AG04450 (cell line): ENCODE measurements at regions of chr7 and their contacts with region 1.

Region 1: DNA sequence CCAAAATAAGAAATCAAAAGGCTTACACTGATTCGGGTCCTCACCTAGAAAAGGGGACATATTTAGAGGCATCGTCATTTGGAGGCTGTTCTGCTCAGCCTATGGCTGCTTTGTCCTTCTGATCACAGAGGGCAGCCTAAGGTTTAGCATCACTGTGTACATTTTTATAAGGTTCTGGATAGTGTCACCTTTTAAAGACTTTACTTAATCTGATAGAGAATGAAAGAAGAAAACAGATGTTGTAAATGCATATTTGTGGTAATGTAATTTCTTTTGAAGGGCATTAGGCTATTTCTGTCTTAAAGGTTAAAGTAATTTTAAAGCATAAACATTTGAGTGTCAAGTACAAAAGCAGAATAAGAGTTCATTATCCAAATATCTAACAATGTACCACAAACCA is 445.3 kb upstream of the LRRN3 start:
- DNase-seq: no peak
- H3K4me3 ChIP-seq: no peak overlapping the region
- H3K27ac ChIP-seq: no peak overlapping the region
- H3K27me3 ChIP-seq: no peaks in the 10 kb centered on the region
- CTCF ChIP-seq: no peak

Region 2: DNA sequence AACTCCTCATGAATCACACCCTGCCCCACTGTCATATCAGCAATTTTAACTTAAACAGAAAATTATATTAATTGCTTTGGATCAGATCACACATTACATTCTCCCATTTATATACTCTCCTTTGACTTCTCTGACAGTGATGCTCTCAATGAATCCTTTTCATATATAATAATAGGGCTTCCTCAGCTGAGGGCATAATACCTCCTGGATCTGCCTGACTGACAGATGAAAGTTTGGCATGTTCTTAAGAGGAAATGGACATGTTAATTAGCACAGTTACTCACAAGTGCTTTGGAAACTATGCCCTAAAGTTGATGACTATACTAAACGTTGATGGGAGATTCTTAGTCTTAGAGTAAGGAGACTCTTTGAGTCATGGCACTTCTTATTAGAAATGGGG is 32.9 kb before region 1 on chr7:
- CTCF ChIA-PET with region 1: interaction called, 10 read pairs
- POLR2A ChIA-PET with region 1: no interaction called
- DNase-seq: no peak
- H3K4me3 ChIP-seq: no peak overlapping the region
- H3K27ac ChIP-seq: no peak overlapping the region
- H3K27me3 ChIP-seq: no peaks in the 10 kb centered on the region
- CTCF ChIP-seq: no peak